Sciatic nerve (tissue), 2 donors: ENCODE measurements at regions of chr2 and their contacts with region 1.

Region 1: GRCh38 chr2:101831351-101831865 is 133.9 kb downstream of the MAP4K4 start:
- DNase-seq: peak; percentile 81
- ATAC-seq: peak; percentile 94

Region 2: DNA sequence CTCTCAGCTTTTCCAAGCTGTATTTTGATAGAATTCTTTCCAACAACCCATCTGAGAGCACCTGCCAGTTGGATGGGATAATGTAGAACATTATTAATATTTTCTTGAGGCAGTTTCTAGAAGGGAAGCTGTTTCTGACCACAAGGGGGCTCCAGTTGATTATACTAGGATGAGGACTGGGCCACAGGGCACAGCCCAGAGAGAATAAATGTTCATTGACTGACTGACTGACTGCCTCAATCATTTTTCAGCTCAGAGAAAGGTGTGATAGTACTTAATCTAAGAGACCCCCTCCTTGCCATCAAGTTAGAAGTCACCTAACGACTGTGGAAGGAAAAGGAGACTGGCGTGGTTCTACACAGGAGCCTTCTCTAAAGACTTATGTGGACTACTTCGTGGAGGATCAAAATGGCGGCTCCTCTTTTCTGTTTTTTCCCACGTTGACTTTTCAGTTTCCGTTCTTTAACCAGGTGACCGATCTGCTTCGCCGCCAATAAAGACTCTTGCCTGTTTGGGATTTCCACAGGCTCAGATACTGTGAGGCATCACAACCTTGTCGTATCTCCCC is 412.2 kb before region 1 on chr2:
- intact Hi-C with region 1: loop called (anchors 5 kb)
- DNase-seq: peak; percentile 72
- ATAC-seq: peak; percentile 86

Region 3: GRCh38 chr2:101518578-101519492 is 312.6 kb before region 1 on chr2:
- intact Hi-C with region 1: loop called (anchors 10 kb)
- DNase-seq: no peak
- ATAC-seq: peak; percentile 75